ENCODE measurements at regions of chr10 and their contacts with region 1.

Region 1: DNA sequence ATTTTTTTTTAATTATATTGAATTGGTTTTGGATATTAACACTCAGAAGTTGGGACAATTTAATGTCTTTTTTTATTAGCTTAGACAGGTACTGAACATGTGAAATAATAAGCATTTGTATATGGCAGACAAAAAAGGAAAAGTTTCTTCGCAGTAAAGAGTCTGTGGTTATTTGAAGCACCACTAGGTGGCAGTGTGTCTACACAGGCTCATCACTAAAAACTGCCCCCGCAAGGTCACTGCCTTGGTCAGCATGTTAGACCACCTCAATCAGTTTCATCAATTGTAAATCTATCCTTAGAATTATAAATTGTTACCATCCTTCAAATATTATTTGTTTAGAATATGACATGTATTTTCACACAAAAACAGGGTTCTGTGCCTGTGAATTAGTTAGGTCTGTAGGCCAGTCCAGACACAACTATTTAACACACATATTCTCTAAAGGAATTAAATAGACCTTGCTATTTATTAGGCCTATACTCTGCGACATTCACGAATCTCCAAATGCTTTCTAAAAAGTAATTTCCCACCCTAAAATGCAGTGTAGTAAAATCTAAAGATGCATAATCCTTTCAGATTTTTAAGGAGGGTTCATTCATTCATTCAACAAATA is 17.0 kb downstream of the PNLIPRP3 start:
- DNase-seq: peak; percentile 21
- H3K4me3 ChIP-seq: no peak overlapping the region
- H3K27ac ChIP-seq: no peak overlapping the region
- H3K27me3 ChIP-seq: no peaks in the 10 kb centered on the region
- CTCF ChIP-seq: peak; percentile 85

Region 2: DNA sequence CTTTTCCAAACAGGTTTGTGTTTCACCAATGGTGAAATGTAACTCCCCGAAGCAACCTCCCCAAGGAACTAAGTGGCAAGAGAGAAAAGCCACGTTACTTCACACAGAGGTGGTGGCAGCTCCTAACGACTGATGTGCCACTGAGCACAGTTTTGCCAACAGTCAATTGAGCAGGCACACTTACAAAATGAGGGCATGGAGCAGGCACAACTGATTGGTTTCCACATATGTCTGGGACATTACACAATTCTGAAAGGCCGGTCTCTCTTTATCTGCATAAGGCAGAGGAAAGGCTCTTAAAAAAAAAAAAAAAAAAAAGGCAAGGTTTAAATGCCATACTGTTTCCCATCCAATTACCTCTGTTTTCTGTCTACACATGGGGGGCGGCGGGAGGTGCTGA is 258.4 kb before region 1 on chr10:
- CTCF ChIA-PET with region 1: no interaction called
- POLR2A ChIA-PET with region 1: no interaction called
- DNase-seq: no peak
- H3K4me3 ChIP-seq: no peak overlapping the region
- H3K27ac ChIP-seq: no peak overlapping the region
- H3K27me3 ChIP-seq: no peaks in the 10 kb centered on the region
- CTCF ChIP-seq: no peak

Region 3: GRCh38 chr10:116201011-116201410 is 243.6 kb before region 1 on chr10:
- CTCF ChIA-PET with region 1: no interaction called
- POLR2A ChIA-PET with region 1: no interaction called
- DNase-seq: no peak
- H3K4me3 ChIP-seq: no peak overlapping the region
- H3K27ac ChIP-seq: no peak overlapping the region
- H3K27me3 ChIP-seq: no peaks in the 10 kb centered on the region
- CTCF ChIP-seq: no peak

Region 4: DNA sequence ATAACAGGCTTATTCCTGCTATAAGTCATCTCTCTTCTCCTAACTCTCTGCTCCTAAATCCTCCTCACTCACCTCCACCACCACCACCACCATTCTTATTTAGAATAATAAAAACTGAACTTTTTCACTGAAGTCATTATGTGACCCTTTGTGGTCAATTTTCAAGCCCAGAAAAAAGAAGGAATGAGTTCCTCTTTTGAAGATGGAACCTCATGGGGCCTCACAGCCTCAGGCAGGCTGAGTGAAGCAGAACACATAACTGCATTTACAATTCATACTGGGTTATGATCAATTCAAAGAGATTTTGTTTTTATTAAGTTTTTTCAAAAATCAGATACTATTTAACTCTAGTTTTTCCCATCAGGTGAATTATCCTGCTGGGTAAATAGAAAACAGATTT is 12.9 kb after region 1 on chr10:
- CTCF ChIA-PET with region 1: interaction called, 10 read pairs
- POLR2A ChIA-PET with region 1: no interaction called
- DNase-seq: no peak
- H3K4me3 ChIP-seq: no peak overlapping the region
- H3K27ac ChIP-seq: no peak overlapping the region
- H3K27me3 ChIP-seq: no peaks in the 10 kb centered on the region
- CTCF ChIP-seq: no peak

Measured in AG04450 (cell line).